ENCODE measurements at regions of chr4 and their contacts with region 1.

Region 1: GRCh38 chr4:153142700-153143438 is 61.4 kb upstream of the TRIM2 start:
- DNase-seq: no peak
- H3K4me3 ChIP-seq: peak overlapping the region in 3 of 4 donors; percentile 6 to 36 (median 32)
- H3K27ac ChIP-seq: no peak overlapping the region
- H3K4me1 ChIP-seq: peaks cover 5 to 11% (median 10%) of the 10 kb centered on the region in 4 donors
- H3K27me3 ChIP-seq: no peaks in the 10 kb centered on the region
- CTCF ChIP-seq: peak; percentile 82 to 87 (median 83)
- EP300 ChIP-seq: no peak
- POLR2A ChIP-seq: no peak

Region 2: DNA sequence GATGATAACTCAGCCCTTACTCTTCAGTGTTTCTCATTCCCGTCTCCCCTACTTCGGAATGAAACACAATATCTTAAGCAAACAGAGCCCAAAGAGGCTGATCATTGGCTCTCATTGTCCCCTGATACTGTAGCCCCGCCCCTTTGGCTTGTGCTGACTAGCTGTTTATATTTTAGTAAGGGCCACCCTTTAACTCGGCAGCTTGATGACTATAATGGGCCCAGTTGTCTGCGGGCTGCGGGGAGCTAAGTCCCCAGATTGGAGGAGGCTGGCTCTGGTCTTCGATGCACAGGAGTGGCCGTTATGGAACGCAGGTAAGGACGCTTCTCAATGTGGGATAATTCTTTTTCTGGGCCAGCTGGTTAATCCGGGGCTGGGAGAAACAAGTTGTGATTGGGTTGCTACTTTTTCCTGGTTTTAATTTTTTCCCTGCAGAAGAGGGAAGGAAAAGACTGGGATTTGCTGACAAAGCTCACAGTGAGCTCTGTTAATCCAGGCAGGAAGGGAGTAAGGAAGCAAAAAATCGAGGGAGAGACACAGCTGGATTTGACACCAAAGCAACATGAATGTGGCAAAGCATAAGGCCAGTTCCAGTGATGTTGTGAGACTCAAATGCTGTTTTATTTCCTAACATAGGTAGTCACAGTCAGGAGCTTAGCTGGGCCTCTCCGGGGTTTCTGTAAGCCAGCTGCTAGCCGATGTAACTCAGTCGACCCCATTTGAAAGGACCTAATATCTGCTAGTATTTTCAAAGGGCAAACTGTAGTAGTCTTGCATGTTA is 61.6 kb after region 1 on chr4 and contains the start of gene TRIM2:
- intact Hi-C with region 1: loop called (anchors 10 kb)
- DNase-seq: no peak
- H3K4me3 ChIP-seq: peak within 1 kb of the TSS; percentile 10 to 42 (median 22)
- H3K27ac ChIP-seq: peak within 1 kb of the TSS in 2 of 4 donors; percentile 34 to 53
- H3K4me1 ChIP-seq: peaks cover 0 to 18% (median 4%) of the 10 kb centered on the region in 4 donors
- H3K27me3 ChIP-seq: no peaks in the 10 kb centered on the region
- CTCF ChIP-seq: no peak
- EP300 ChIP-seq: no peak
- POLR2A ChIP-seq: no peak
- total RNA-seq, gene TRIM2: 28.3 to 36.9 (median 30.4) TPM

Measured in esophagus muscularis mucosa (tissue), 4 donors.